Activated CD4-positive, alpha-beta T cell treated with anti-CD3 and anti-CD28 coated beads, Interleukin-2, amount 10 ng/mL, durations not matched to agents 24 days and 14 days (primary cell): ENCODE measurements at regions of chr17 and their contacts with region 1.

Region 1: DNA sequence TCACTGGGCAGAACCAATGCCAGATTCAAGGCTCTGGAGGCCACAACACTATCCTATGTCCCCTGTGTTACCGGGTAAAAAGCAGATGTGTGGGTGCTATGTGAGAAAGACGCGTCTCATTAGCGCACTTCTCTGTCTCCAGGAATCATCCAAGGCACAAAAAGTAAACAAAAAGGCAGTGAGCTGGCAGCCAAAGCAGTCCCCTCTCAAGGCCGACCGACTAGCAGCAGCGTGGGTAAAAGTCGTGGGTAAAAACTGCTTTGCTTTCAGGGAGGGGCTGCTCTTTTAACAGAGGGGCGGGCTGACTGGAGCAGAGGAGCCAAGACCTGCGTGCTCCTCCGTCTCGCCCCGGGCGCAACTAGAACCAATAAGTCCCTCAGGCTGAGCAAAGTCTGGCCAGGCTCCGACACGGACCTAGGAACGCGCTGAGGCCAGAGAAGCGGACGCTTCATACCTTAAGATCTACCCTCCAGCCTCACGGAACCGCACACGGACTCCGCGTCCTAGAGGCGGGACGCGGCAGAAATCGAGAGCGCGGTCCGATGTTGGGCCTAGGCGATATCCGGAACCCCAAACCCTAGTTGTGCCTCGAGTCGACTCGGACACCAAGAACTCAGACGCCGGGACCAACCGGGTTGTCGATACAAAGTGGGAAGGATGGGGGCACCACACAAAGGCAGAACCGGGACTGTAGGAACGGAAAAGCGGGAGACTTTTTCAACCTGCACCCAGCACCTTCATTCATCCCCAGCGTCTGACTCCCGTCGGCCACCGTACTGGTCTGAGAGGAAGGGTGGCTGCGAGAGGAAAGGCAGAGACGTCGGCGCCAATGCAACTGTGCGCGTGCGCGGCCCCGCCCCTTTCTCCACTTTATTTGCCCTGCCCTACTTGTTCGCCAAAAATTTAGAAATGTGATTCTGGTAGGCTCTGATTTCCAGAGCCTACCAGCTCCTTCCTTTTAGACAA is at the start of gene INTS2:
- DNase-seq: peak; percentile 98
- H3K4me3 Mint-ChIP-seq: peak within 1 kb of the TSS; percentile 96
- H3K27ac Mint-ChIP-seq: peak within 1 kb of the TSS; percentile 97
- H3K4me1 Mint-ChIP-seq: peaks cover 18% of the 10 kb centered on the region
- H3K27me3 Mint-ChIP-seq: peaks cover 2% of the 10 kb centered on the region
- total RNA-seq, gene INTS2: 29.5 and 29.9 TPM in 2 replicates

Region 2: GRCh38 chr17:61862975-61863800 is 64.3 kb before region 1 on chr17 and contains the start of gene BRIP1:
- intact Hi-C with region 1: loop called (anchors 1 kb)
- DNase-seq: peak; percentile 96
- H3K4me3 Mint-ChIP-seq: peak within 1 kb of the TSS; percentile 98
- H3K27ac Mint-ChIP-seq: peak within 1 kb of the TSS; percentile 98
- H3K4me1 Mint-ChIP-seq: peaks cover 38% of the 10 kb centered on the region
- H3K27me3 Mint-ChIP-seq: no peaks in the 10 kb centered on the region
- total RNA-seq, gene BRIP1: 17.2 and 19.9 TPM in 2 replicates

Region 3: DNA sequence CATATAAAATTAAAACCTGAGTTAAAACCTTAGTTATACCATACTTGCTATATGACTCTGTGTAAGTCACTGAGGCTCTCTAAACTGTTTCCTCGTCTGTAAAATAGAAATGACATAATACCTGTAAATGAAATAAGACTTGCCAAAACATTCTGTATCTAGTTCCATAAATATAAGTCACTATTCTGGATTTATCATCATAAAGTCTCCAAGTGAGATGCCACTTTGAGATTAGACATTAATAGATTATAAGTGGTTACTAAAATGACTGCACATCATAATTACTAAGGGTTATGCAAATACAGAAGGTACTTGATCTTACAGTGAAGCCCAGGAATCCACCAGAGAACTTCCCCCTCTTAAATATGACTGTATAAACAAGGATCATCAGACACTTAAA is 52.2 kb before region 1 on chr17:
- intact Hi-C with region 1: no loop called
- DNase-seq: no peak
- H3K4me3 Mint-ChIP-seq: no peak overlapping the region
- H3K27ac Mint-ChIP-seq: no peak overlapping the region
- H3K4me1 Mint-ChIP-seq: no peaks in the 10 kb centered on the region
- H3K27me3 Mint-ChIP-seq: no peaks in the 10 kb centered on the region

Region 4: GRCh38 chr17:62065598-62066468 is 138.3 kb after region 1 on chr17:
- intact Hi-C with region 1: loop called (anchors 1 kb)
- DNase-seq: peak; percentile 99
- H3K4me3 Mint-ChIP-seq: peak overlapping the region; percentile 97
- H3K27ac Mint-ChIP-seq: peak overlapping the region; percentile 99
- H3K4me1 Mint-ChIP-seq: peaks cover 29% of the 10 kb centered on the region
- H3K27me3 Mint-ChIP-seq: no peaks in the 10 kb centered on the region